ENCODE measurements at regions of chr10 and their contacts with region 1.

Region 1: GRCh38 chr10:12656518-12657142 is 307.3 kb downstream of the CAMK1D start:
- DNase-seq: peak; percentile 75
- CTCF ChIP-seq: peak; percentile 57

Region 2: GRCh38 chr10:12081879-12082557 is 574.6 kb before region 1 on chr10:
- CTCF ChIA-PET with region 1: no interaction called
- POLR2A ChIA-PET with region 1: no interaction called
- DNase-seq: no peak
- CTCF ChIP-seq: no peak

Region 3: GRCh38 chr10:12617191-12618175 is 39.1 kb before region 1 on chr10:
- CTCF ChIA-PET with region 1: interaction called, 10 read pairs
- POLR2A ChIA-PET with region 1: no interaction called
- DNase-seq: no peak
- CTCF ChIP-seq: no peak

Region 4: GRCh38 chr10:12638103-12638502 is 18.5 kb before region 1 on chr10:
- CTCF ChIA-PET with region 1: interaction called, 76 read pairs
- POLR2A ChIA-PET with region 1: no interaction called
- DNase-seq: no peak
- CTCF ChIP-seq: no peak

Region 5: DNA sequence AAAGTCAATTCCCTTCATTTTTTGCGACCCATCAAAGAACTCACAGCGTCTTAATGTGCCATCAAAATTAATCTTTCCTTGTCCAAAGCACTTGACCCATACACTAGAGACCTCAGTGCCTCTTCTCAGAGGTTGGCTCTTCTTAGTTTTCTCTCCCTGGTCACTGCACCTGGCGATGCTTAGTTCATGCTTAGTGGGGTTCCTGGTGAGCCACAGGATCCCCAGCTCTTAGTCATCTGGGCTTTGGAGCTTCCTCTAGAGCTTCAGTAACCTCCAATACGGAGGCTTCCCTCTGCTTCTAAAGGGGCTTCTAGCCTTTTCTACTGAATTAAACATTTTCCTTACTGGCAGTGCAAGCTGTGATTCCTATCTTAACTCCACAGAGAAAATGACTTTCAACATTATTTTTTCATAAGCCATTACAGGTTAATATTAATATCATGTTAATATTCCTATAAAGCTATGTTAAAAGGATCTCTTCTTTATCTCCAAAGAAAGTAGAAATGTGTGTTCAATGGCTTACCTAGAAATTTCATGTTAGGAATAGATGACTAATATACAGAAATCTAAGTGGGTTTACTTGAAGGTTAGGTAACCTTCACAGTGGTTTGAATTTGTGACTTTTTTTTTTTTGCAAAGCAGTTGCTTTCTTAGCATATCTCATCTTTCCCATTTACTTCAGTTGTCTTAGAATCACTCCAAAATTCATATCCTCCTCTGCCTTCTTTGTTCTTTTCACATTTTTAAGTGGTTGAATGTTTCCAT is 12.1 kb before region 1 on chr10:
- CTCF ChIA-PET with region 1: interaction called, 76 read pairs
- POLR2A ChIA-PET with region 1: no interaction called
- DNase-seq: peak; percentile 38
- CTCF ChIP-seq: no peak